ENCODE measurements at regions of chr16 and their contacts with region 1.

Region 1: GRCh38 chr16:27268376-27269299 is at the start of gene NSMCE1:
- DNase-seq: peak; percentile 94
- ATAC-seq: peak; percentile 97
- H3K4me3 ChIP-seq: peak within 1 kb of the TSS; percentile 85
- H3K27ac ChIP-seq: peak within 1 kb of the TSS; percentile 41
- H3K4me1 ChIP-seq: peaks cover 28% of the 10 kb centered on the region
- H3K27me3 ChIP-seq: no peaks in the 10 kb centered on the region
- CTCF ChIP-seq: no peak
- total RNA-seq, gene NSMCE1: 25.9 and 32.5 TPM in 2 replicates

Region 2: DNA sequence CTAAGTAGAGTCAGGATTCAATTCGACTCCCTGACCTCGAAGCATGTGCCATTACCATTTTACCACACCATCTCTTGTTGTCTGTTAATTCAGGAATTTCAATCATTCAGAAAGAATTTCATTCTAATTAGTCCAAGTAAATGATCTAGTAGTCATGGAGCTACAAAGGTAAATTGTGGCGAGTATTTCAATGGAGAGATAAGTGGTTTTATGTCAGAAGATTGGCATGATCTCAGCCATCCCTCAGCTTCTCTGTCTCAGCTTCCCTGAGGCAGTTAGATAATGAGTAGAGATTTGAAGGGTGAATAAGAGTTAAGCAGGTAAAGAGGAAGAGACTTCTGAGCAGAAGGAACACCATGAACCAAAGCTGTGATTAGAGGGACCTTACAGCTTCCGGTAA is 1483.3 kb before region 1 on chr16:
- CTCF ChIA-PET with region 1: no interaction called
- POLR2A ChIA-PET with region 1: no interaction called
- intact Hi-C with region 1: no loop called
- DNase-seq: no peak
- ATAC-seq: no peak
- H3K4me3 ChIP-seq: no peak overlapping the region
- H3K27ac ChIP-seq: no peak overlapping the region
- H3K4me1 ChIP-seq: no peaks in the 10 kb centered on the region
- H3K27me3 ChIP-seq: no peaks in the 10 kb centered on the region
- CTCF ChIP-seq: no peak

Region 3: DNA sequence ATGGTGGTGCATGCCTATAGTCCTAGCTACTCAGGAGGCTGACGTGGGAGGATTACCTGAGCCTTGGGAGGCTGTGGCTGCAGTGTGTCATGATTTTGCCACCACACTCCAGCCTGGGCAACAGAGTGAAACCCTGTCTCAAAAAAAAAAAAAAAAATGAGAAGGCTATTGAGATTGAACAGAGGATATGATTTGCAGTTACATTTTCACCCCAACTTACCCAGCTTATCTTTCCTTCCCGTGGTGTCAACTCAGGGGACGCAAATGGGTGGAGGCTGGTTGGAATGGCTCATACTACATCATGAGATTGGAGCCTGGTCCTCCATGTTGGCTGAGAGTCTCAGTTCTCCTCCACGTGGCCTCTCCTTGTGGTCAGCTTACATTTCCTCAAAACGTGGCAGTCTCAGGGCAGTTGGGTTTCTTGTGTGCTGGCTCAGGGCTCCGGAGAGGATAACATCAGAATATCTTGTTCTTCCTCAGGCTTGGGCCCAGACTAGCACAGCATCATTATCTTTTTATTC is 17.1 kb after region 1 on chr16:
- CTCF ChIA-PET with region 1: no interaction called
- POLR2A ChIA-PET with region 1: interaction called, 25 read pairs
- intact Hi-C with region 1: no loop called
- DNase-seq: no peak
- ATAC-seq: no peak
- H3K4me3 ChIP-seq: no peak overlapping the region
- H3K27ac ChIP-seq: peak overlapping the region; percentile 56
- H3K4me1 ChIP-seq: peaks cover 14% of the 10 kb centered on the region
- H3K27me3 ChIP-seq: no peaks in the 10 kb centered on the region
- CTCF ChIP-seq: no peak

Region 4: DNA sequence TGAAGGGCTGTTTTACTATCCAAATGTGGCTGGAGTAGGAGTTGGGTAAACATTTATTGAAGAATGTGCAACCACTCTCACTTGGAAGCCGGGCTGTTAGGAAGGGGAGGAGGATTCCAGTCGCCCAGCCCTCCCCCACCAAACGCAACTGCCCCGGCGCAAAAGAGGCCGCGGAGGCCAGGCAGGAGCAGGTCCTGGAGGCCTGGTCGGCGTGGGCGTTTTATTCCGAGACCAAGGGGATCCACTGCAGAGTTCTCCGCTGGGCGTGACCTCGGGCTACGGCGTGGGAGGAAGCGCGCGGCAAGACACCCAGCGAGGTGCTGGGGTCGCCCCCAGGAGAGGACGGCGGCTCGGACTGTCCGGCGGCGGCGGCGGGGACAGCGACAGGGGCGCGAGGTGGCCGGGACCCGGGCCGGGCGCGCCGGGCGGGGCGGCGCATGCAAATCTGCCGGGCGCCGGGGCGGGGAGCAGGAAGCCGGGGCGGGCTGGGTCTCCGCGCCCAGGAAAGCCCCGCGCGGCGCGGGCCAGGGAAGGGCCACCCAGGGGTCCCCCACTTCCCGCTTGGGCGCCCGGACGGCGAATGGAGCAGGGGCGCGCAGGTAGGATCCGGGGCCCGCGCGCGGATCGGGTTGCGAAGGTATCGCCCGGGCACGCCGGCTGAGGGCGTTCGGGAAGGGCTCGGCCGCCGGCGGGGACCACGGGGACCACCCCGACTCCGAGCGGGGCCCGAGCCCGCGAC is 45.0 kb after region 1 on chr16 and contains the start of gene IL4R:
- CTCF ChIA-PET with region 1: no interaction called
- POLR2A ChIA-PET with region 1: no interaction called
- intact Hi-C with region 1: loop called (anchors 10 kb)
- DNase-seq: peak; percentile 48
- ATAC-seq: peak; percentile 39
- H3K4me3 ChIP-seq: peak within 1 kb of the TSS; percentile 93
- H3K27ac ChIP-seq: peak within 1 kb of the TSS; percentile 98
- H3K4me1 ChIP-seq: peaks cover 36% of the 10 kb centered on the region
- H3K27me3 ChIP-seq: no peaks in the 10 kb centered on the region
- CTCF ChIP-seq: no peak
- total RNA-seq, gene IL4R: 25.1 and 32.1 TPM in 2 replicates

Region 5: GRCh38 chr16:27529962-27530361 is 261.3 kb after region 1 on chr16:
- CTCF ChIA-PET with region 1: no interaction called
- POLR2A ChIA-PET with region 1: no interaction called
- intact Hi-C with region 1: no loop called
- DNase-seq: peak; percentile 45
- ATAC-seq: peak; percentile 58
- H3K4me3 ChIP-seq: no peak overlapping the region
- H3K27ac ChIP-seq: no peak overlapping the region
- H3K4me1 ChIP-seq: peaks cover 4% of the 10 kb centered on the region; the same call in 1 of the 2 replicates
- H3K27me3 ChIP-seq: no peaks in the 10 kb centered on the region
- CTCF ChIP-seq: no peak

Region 6: GRCh38 chr16:27685807-27686206 is 417.2 kb after region 1 on chr16:
- CTCF ChIA-PET with region 1: no interaction called
- POLR2A ChIA-PET with region 1: no interaction called
- intact Hi-C with region 1: no loop called
- DNase-seq: no peak
- ATAC-seq: no peak
- H3K4me3 ChIP-seq: no peak overlapping the region
- H3K27ac ChIP-seq: no peak overlapping the region
- H3K4me1 ChIP-seq: no peaks in the 10 kb centered on the region
- H3K27me3 ChIP-seq: no peaks in the 10 kb centered on the region
- CTCF ChIP-seq: no peak

Measured in PC-3 (cell line).